Posterior vena cava (tissue), 2 donors: ENCODE measurements at regions of chr4 and their contacts with region 1.

Region 1: GRCh38 chr4:55345980-55346850 is at the start of gene SRD5A3:
- DNase-seq: peak; percentile 95
- total RNA-seq, gene SRD5A3: 9.7 to 10.0 TPM

Region 2: GRCh38 chr4:55330241-55330640 is 16.0 kb before region 1 on chr4:
- intact Hi-C with region 1: no loop called
- DNase-seq: no peak

Region 3: GRCh38 chr4:55395529-55396307 is 49.5 kb after region 1 on chr4 and contains the start of gene TMEM165:
- intact Hi-C with region 1: loop called in 1 of 2 experiments (anchors 5 kb)
- DNase-seq: peak; percentile 97
- total RNA-seq, gene TMEM165: 132 to 149 TPM

Region 4: GRCh38 chr4:55409468-55410171 is 63.4 kb after region 1 on chr4:
- intact Hi-C with region 1: no loop called
- DNase-seq: no peak

Region 5: DNA sequence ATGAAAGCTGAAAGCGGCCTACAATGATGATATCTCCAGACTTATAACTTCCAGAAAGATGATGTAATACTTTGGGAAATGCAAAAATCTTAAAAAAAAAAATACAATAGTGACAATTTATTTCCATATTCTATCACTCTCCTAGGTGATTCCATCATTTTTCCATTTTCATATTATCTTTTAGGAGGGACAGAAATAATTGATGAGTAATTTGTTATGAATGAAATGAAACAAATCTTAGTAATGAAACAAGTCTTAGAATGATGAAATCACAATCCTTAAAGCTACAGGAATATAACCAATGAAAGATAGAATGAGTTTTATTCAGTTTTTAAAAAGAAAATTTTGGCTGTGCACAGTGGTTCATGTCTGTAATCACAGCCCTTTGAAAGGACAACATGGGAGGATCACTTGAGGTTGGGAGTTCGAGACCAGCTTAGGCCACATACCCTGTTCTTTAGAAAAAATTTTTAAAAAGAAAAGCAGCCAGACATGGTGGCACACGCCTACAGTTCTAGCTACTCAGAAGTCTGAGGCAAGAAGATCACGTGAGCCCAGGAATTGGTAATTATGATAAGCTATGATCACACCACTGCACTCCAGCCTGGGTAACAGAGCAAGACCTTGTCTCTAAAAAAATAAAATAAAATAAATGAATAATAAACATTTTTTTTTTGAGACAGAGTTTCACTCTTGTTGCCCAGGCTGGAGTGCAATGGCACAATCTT is 178.8 kb after region 1 on chr4:
- intact Hi-C with region 1: no loop called
- DNase-seq: no peak

Region 6: GRCh38 chr4:55546756-55547465 is 200.7 kb after region 1 on chr4 and contains the start of gene CLOCK:
- intact Hi-C with region 1: loop called (anchors 5 to 10 kb)
- DNase-seq: peak; percentile 96
- total RNA-seq, gene CLOCK: 35.2 to 45.1 TPM

Region 7: DNA sequence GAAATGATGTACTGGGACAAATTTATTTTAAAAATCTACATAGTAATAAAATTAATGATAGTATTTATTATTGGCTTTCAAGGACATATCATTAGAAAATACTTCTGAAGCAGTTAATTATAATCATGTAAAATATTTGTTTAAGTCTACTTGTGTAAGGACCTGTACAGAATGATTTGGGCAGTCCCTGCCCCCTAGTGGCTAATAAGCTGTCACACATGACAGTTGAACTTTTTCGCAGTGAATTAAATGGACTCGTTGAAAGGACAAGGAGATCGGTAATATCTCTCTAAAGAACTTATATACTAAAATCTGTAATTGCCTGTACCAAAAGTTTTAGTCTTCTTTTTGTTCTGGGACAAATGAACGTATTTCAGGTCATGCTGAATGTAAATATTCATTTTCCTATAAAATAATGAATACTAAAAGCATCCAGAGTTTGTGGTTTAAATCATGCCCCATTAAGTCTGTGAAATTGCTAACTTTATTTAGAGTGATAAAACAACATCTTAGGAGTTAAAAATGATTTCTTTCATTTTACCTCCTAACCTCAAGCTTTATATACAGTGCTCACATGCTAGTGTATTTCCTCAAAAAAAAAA is 520.9 kb after region 1 on chr4:
- intact Hi-C with region 1: loop called in 1 of 2 experiments (anchors 10 kb)
- DNase-seq: no peak